Naive thymus-derived CD4-positive, alpha-beta T cell (primary cell): ENCODE measurements at regions of chr12 and their contacts with region 1.

Region 1: DNA sequence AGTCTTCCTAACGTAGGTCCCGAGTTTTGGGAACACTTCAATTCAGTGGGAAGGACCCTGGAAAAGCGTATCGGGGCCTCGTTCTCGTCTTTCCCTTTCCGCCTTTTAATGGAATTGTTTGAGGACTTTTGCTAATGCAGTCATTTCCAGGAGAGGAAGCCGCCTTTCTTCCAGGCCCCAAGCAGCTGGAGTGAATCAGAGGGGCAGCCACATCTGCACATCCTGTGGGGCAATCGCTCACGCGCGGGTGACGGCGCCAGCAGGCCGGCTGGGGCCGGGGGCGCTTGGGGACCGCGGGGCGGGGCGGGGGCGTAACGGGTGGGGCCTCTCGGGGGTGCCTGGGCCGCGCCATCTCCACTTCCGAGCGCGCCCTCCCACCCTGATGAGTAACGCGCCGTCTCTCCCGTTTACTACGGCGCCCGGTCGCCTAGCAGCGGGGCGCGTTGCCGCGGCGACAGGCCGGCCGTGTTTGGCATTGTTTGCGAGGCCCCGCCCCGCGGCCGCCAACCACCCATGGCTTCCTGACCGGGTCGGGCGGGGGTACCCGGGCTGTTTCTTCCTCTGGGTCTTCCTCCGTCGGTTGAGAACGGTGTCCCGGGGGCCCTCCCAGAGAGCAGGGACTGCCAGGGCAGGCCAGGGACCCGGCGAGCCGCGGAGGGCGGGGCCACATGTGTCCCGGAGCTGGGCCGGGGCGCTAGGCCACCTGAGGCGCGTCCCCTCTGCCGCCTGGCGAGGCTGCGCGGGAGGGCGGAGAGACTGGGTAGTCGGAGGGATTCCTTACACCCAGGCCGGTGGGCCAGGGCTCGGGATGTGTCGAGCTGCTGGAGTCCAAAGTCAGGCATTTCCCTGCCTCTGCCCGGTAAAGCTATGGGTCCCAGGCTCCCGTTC is 2.3 kb downstream of the GSG1 start:
- DNase-seq: peak; percentile 92 to 96 (median 94)
- ATAC-seq: peak; percentile 93
- H3K4me3 ChIP-seq: peak overlapping the region; percentile 68
- H3K4me3 Mint-ChIP-seq: peak overlapping the region; percentile 82 to 87 (median 84)
- H3K27ac ChIP-seq: peak overlapping the region; percentile 92
- H3K27ac Mint-ChIP-seq: peak overlapping the region; percentile 85 to 99 (median 95)
- H3K4me1 ChIP-seq: peaks cover 6 to 32% of the 10 kb centered on the region in 2 donors
- H3K4me1 Mint-ChIP-seq: peaks cover 24 to 49% (median 43%) of the 10 kb centered on the region in 7 donors
- H3K27me3 ChIP-seq: no peaks in the 10 kb centered on the region
- H3K27me3 Mint-ChIP-seq: peaks cover 0 to 5% (median 0%) of the 10 kb centered on the region in 5 donors

Region 2: DNA sequence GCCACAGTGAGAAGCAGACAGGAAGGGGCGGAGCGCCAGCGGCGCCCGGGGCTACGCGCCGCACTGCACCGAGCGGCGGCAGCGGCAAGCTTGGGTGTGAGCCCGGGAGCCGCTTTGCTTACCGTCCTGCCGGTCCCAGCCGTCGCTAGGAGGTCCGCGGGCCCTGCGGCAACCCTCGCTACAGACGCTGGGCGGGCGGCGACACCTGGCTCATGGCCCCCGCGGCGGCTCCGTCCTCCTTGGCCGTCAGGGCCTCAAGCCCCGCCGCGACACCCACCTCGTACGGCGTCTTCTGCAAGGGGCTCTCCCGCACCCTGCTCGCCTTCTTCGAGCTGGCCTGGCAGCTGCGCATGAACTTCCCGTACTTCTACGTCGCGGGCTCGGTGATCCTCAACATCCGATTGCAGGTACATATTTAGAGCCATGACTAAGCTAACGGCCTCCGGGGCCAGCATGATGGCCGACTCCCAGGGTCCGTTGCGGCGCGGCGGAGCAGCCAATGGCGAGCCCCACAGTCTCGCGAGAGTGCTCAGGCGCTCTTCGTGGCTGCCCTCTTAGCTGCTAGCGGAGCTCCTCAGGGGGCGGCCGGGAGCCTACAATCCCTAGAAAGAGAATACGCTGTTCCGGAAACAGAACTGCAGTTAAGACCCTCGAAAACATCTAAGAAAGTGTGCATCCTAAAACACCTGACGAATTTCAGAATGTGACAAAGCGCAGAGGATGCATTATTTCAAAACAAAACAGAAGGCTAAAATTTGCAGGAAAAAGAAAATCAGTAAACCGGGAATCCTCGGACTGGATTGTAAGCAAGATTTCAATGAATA is 1929.8 kb before region 1 on chr12 and contains the start of gene SMIM10L1:
- CTCF ChIA-PET with region 1: no interaction called
- POLR2A ChIA-PET with region 1: no interaction called
- intact Hi-C with region 1: loop called in 1 of 2 experiments (anchors 1 kb)
- DNase-seq: peak; percentile 77 to 88 (median 83)
- ATAC-seq: peak; percentile 97
- H3K4me3 ChIP-seq: peak within 1 kb of the TSS; percentile 74
- H3K4me3 Mint-ChIP-seq: peak within 1 kb of the TSS; percentile 94 to 100 (median 98)
- H3K27ac ChIP-seq: peak within 1 kb of the TSS; percentile 72
- H3K27ac Mint-ChIP-seq: peak within 1 kb of the TSS; percentile 97 to 100 (median 99)
- H3K4me1 ChIP-seq: peaks cover 30 to 36% of the 10 kb centered on the region in 2 donors
- H3K4me1 Mint-ChIP-seq: peaks cover 53 to 82% (median 72%) of the 10 kb centered on the region in 7 donors
- H3K27me3 ChIP-seq: no peaks in the 10 kb centered on the region
- H3K27me3 Mint-ChIP-seq: no peaks in the 10 kb centered on the region
- total RNA-seq, gene SMIM10L1: 7.8 to 12.9 (median 8.5) TPM

Region 3: GRCh38 chr12:12486661-12487240 is 614.4 kb before region 1 on chr12:
- CTCF ChIA-PET with region 1: no interaction called
- POLR2A ChIA-PET with region 1: no interaction called
- intact Hi-C with region 1: loop called in 1 of 2 experiments (anchors 5 kb)
- DNase-seq: no peak
- ATAC-seq: no peak
- H3K4me3 ChIP-seq: no peak overlapping the region
- H3K4me3 Mint-ChIP-seq: no peak overlapping the region
- H3K27ac ChIP-seq: no peak overlapping the region
- H3K27ac Mint-ChIP-seq: peak overlapping the region in 6 of 9 donors; percentile 48 to 83 (median 68)
- H3K4me1 ChIP-seq: peaks cover 15 to 16% of the 10 kb centered on the region in 2 donors
- H3K4me1 Mint-ChIP-seq: peaks cover 12 to 43% (median 37%) of the 10 kb centered on the region in 7 donors
- H3K27me3 ChIP-seq: no peaks in the 10 kb centered on the region
- H3K27me3 Mint-ChIP-seq: no peaks in the 10 kb centered on the region

Region 4: GRCh38 chr12:12813120-12814101 is 287.7 kb before region 1 on chr12 and contains the start of gene DDX47:
- CTCF ChIA-PET with region 1: no interaction called
- POLR2A ChIA-PET with region 1: no interaction called
- intact Hi-C with region 1: loop called in 1 of 2 experiments (anchors 1 kb)
- DNase-seq: peak; percentile 91 to 99 (median 96)
- ATAC-seq: peak; percentile 97
- H3K4me3 ChIP-seq: peak within 1 kb of the TSS; percentile 96
- H3K4me3 Mint-ChIP-seq: peak within 1 kb of the TSS; percentile 89 to 99 (median 96)
- H3K27ac ChIP-seq: peak within 1 kb of the TSS; percentile 99
- H3K27ac Mint-ChIP-seq: peak within 1 kb of the TSS; percentile 84 to 99 (median 97)
- H3K4me1 ChIP-seq: peaks cover 28 to 41% of the 10 kb centered on the region in 2 donors
- H3K4me1 Mint-ChIP-seq: peaks cover 36 to 84% (median 69%) of the 10 kb centered on the region in 7 donors
- H3K27me3 ChIP-seq: no peaks in the 10 kb centered on the region
- H3K27me3 Mint-ChIP-seq: no peaks in the 10 kb centered on the region
- total RNA-seq, gene DDX47: 71.6 to 154 (median 75.5) TPM

Region 5: GRCh38 chr12:13144266-13144828 is 43.2 kb after region 1 on chr12:
- CTCF ChIA-PET with region 1: no interaction called
- POLR2A ChIA-PET with region 1: interaction called, 6 read pairs
- intact Hi-C with region 1: loop called in 1 of 2 experiments (anchors 5 kb)
- DNase-seq: peak in 5 of 9 donors; percentile 1 to 20 (median 13)
- ATAC-seq: peak; percentile 46
- H3K4me3 ChIP-seq: no peak overlapping the region
- H3K4me3 Mint-ChIP-seq: peak overlapping the region in 7 of 10 donors; percentile 36 to 66 (median 47)
- H3K27ac ChIP-seq: peak overlapping the region; percentile 24
- H3K27ac Mint-ChIP-seq: peak overlapping the region; percentile 2 to 85 (median 64)
- H3K4me1 ChIP-seq: peaks cover 6 to 14% of the 10 kb centered on the region in 2 donors
- H3K4me1 Mint-ChIP-seq: peaks cover 18 to 38% (median 22%) of the 10 kb centered on the region in 7 donors
- H3K27me3 ChIP-seq: no peaks in the 10 kb centered on the region
- H3K27me3 Mint-ChIP-seq: peaks cover 0 to 4% (median 0%) of the 10 kb centered on the region in 5 donors

Region 6: GRCh38 chr12:13211859-13212664 is 110.9 kb after region 1 on chr12:
- CTCF ChIA-PET with region 1: interaction called, 125 read pairs
- POLR2A ChIA-PET with region 1: interaction called, 5 read pairs
- intact Hi-C with region 1: loop called (anchors 1 kb)
- DNase-seq: peak; percentile 29 to 81 (median 73)
- ATAC-seq: peak; percentile 87
- H3K4me3 ChIP-seq: no peak overlapping the region
- H3K4me3 Mint-ChIP-seq: peak overlapping the region in 1 of 10 donors; percentile 55
- H3K27ac ChIP-seq: no peak overlapping the region
- H3K27ac Mint-ChIP-seq: peak overlapping the region in 3 of 9 donors; percentile 19 to 76 (median 70)
- H3K4me1 ChIP-seq: no peaks in the 10 kb centered on the region
- H3K4me1 Mint-ChIP-seq: peaks cover 5 to 29% (median 7%) of the 10 kb centered on the region in 7 donors
- H3K27me3 ChIP-seq: no peaks in the 10 kb centered on the region
- H3K27me3 Mint-ChIP-seq: peaks cover 0 to 13% (median 0%) of the 10 kb centered on the region in 5 donors

Region 7: DNA sequence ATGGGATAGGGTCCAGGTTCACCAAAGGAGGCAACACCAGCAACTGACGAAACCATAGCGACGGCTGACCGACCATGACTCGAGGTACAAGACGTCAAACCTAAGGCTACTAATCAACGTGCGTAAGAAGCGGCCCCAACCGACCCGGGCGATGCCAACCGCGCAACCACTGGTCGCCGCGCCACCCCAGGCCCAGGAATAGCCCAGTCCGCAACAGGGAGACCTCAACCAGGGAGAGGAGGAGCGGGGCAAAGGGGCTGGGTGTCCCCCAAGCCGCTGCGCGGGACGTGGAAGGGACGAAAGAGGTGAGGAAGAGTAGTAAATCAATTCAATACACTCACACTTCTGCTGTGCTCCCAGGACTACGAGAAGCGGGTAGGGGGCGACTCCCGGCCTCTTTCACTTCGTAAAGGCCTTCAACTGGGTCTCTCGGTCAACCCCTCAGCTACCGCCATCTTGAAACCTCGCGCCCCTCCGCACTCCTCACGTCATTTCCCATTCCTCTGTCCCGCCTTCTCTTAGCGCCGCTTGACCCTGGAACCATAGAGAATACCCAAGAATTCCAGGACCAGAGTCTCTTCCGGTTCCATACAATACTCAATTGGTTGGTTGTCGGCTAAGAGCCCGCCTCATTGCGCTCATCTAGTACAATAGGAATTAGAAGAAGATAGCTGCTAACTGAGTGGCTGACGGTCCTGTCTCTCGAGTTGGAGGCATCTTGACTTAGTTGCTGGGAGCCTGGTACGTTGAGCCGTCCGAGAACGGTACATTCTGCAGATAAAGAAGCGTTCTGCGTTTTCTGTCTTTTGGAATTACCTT is 1702.1 kb after region 1 on chr12 and contains the starts of genes C12orf60 and WBP11:
- CTCF ChIA-PET with region 1: no interaction called
- POLR2A ChIA-PET with region 1: no interaction called
- intact Hi-C with region 1: loop called in 1 of 2 experiments (anchors 5 kb)
- DNase-seq: peak; percentile 56 to 95 (median 91)
- ATAC-seq: peak; percentile 98
- H3K4me3 ChIP-seq: peak within 1 kb of the TSS; percentile 80
- H3K4me3 Mint-ChIP-seq: no peak within 1 kb of the TSS
- H3K27ac ChIP-seq: peak within 1 kb of the TSS; percentile 97
- H3K27ac Mint-ChIP-seq: no peak within 1 kb of the TSS
- H3K4me1 ChIP-seq: peaks cover 14 to 19% of the 10 kb centered on the region in 2 donors
- H3K4me1 Mint-ChIP-seq: peaks cover 0 to 26% (median 10%) of the 10 kb centered on the region in 7 donors
- H3K27me3 ChIP-seq: no peaks in the 10 kb centered on the region
- H3K27me3 Mint-ChIP-seq: no peaks in the 10 kb centered on the region
- total RNA-seq, gene C12orf60: 0.22 to 1.7 (median 1.2) TPM in 4 of 5 experiments, not detected in the other
- total RNA-seq, gene WBP11: 77.9 to 129 (median 90.4) TPM